IMR-90 (cell line): ENCODE measurements at regions of chr5 and their contacts with region 1.

Region 1: GRCh38 chr5:42767491-42768105 is 11.0 kb downstream of the CCDC152 start:
- DNase-seq: peak; percentile 13
- ATAC-seq: peak; percentile 61; the same call in 1 of the 2 replicates
- H3K4me3 ChIP-seq: no peak overlapping the region
- H3K27ac ChIP-seq: no peak overlapping the region
- H3K4me1 ChIP-seq: no peaks in the 10 kb centered on the region
- H3K27me3 ChIP-seq: no peaks in the 10 kb centered on the region
- CTCF ChIP-seq: peak; percentile 53
- POLR2A ChIP-seq: no peak
- RAD21 ChIP-seq: peak; percentile 50

Region 2: DNA sequence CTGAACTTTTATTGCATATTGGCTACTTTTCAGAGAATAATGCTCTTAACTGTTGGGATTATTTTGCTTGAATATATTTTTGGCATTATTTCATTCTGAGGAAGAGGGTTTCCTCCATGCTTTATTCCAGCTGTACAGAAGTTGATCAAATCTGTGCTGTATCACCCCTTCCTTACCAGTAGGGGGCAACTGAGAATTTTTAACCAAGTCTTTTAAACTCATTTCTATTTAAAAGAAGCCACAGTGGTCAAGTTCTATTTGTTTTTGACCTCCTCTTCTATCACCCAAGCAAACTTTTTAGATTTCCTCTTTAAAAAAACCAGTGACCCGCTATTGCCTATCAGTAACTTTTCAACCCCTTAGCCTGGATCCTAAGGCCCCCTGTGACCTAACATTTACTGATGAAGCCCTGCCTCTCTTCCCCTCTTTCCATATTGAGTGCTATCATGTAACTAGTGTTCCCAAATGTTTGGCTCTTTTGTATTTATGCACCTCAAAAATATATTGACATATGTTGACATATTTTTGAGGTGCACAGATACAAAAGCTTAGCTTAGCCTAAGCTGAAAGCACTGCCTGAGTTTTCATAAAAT is 761.9 kb before region 1 on chr5:
- CTCF ChIA-PET with region 1: interaction called, 3 read pairs
- POLR2A ChIA-PET with region 1: no interaction called
- dilution Hi-C with region 1: no loop called
- in situ Hi-C with region 1: no loop called
- intact Hi-C with region 1: loop called (anchors 2 kb)
- DNase-seq: peak; percentile 24
- ATAC-seq: peak; percentile 64; the same call in 1 of the 2 replicates
- H3K4me3 ChIP-seq: no peak overlapping the region
- H3K27ac ChIP-seq: no peak overlapping the region
- H3K4me1 ChIP-seq: no peaks in the 10 kb centered on the region
- H3K27me3 ChIP-seq: no peaks in the 10 kb centered on the region
- CTCF ChIP-seq: peak; percentile 64
- POLR2A ChIP-seq: no peak
- RAD21 ChIP-seq: no peak

Region 3: DNA sequence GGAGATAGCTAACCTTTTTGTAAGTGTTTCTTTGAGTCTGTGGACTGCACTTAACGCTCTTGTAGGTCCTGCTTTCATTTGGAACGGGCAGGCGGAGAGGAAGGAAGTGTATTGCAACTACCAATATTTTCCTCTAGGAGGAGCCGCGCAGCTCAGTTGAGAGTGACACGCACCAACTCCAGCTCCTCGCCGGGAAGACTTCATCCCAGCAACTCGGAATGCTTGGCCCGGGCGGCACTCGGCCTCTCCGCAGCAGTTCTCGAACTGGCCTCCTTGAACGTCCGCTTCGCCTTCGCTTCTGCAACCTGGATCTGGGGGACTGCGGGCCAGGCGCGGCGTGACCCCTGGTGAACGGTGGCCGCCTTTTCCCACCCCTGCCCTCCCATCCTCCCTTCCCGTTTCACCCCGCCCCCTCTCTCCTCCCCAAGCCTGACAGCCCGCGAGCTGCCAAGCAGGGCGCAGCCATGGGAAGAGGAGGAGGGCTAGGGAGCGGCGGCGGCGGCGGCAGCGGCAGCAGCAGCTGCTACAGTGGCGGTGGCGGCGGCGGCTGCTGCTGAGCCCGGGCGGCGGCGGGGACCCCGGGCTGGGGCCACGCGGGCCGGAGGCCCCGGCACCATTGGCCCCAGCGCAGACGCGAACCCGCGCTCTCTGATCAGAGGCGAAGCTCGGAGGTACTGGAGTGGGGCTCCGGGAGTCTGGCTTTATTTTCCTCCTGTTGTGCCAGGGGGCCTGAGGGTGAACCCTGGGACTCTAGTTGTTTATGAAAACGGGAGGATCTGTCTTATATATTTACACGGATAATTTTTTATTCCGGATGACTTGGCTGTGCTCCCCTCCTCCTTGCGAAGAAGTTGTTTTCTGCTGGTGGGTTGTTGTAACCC is 344.1 kb before region 1 on chr5 and contains the start of gene GHR:
- CTCF ChIA-PET with region 1: no interaction called
- POLR2A ChIA-PET with region 1: no interaction called
- dilution Hi-C with region 1: no loop called
- in situ Hi-C with region 1: no loop called
- intact Hi-C with region 1: loop called (anchors 1 kb)
- DNase-seq: peak; percentile 88
- ATAC-seq: peak; percentile 98
- H3K4me3 ChIP-seq: peak within 1 kb of the TSS; percentile 63
- H3K27ac ChIP-seq: peak within 1 kb of the TSS; percentile 47
- H3K4me1 ChIP-seq: no peaks in the 10 kb centered on the region
- H3K27me3 ChIP-seq: no peaks in the 10 kb centered on the region
- CTCF ChIP-seq: peak; percentile 84
- POLR2A ChIP-seq: no peak
- RAD21 ChIP-seq: peak; percentile 57
- total RNA-seq, gene GHR: 1.1 TPM in 2 replicates